ENCODE measurements at regions of chr15 and their contacts with region 1.

Region 1: GRCh38 chr15:97978401-97979139 is 18.1 kb downstream of the ARRDC4 start:
- DNase-seq: no peak
- ATAC-seq: no peak

Region 2: GRCh38 chr15:97960364-97961066 is 18.1 kb before region 1 on chr15 and contains the start of gene ARRDC4:
- intact Hi-C with region 1: loop called (anchors 2 kb)
- DNase-seq: peak; percentile 100
- ATAC-seq: peak; percentile 99
- total RNA-seq, gene ARRDC4: 15.9 TPM

Region 3: GRCh38 chr15:98057453-98057852 is 78.9 kb after region 1 on chr15:
- intact Hi-C with region 1: no loop called
- DNase-seq: no peak
- ATAC-seq: no peak

Measured in Right ventricle myocardium inferior (tissue), 1 donor.